ENCODE measurements at regions of chr7 and their contacts with region 1.

Region 1: GRCh38 chr7:71198887-71199286 is 66.9 kb downstream of the GALNT17 start:
- DNase-seq: peak in 4 of 5 donors; percentile 48 to 59 (median 54)
- H3K4me3 ChIP-seq: no peak overlapping the region
- H3K27ac ChIP-seq: peak overlapping the region in 1 of 2 donors; percentile 41
- H3K4me1 ChIP-seq: peaks cover 8% of the 10 kb centered on the region
- H3K27me3 ChIP-seq: no peaks in the 10 kb centered on the region
- CTCF ChIP-seq: no peak
- EP300 ChIP-seq: no peak
- POLR2A ChIP-seq: no peak

Region 2: GRCh38 chr7:70040970-70041766 is 1157.7 kb before region 1 on chr7:
- intact Hi-C with region 1: no loop called
- DNase-seq: no peak
- H3K4me3 ChIP-seq: no peak overlapping the region
- H3K27ac ChIP-seq: no peak overlapping the region
- H3K4me1 ChIP-seq: no peaks in the 10 kb centered on the region
- H3K27me3 ChIP-seq: no peaks in the 10 kb centered on the region
- CTCF ChIP-seq: peak in 1 of 3 donors; percentile 37
- EP300 ChIP-seq: no peak
- POLR2A ChIP-seq: no peak

Region 3: DNA sequence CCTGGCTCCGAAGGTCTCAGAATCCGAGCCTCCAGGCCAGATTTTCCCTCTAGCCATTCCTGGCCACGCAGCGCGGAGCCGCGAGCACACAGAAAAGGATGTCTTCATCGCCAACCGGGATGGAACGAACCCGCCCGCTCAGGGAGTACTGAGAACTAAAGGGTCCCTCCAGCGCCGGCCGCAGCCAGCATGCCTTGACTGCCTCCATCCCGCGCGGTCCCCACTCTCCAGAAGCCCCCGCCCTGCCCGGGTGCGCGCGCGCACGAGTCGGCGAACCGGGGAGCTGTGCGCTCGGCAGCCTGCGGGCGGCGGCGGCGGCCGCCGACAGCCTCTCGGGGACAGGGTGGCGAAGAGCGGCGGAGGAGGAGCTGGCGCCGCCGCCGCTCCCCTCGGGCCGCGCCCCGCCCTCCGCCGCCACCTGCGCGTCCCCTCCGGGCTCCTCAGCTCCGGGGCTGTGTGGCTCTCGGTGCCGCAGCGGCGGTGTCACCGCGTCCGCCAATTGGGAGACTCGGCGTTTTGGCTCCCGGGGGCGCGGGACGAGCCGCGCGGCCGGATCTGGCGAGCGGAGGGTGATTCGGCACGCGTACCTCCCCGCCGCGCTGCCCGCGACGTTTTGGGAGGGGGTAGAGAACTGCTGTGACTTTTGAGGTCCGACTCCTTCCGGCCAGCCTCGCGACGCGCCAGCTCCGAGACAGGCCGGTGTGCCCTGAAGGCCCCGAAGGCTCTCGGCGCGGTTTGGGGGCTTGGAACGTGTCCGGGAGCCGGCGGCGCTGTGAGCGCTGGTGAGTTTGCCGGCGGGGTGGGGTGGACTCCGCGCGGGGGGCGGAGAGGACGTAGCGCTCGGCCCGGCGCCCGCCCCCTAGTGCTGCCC is 67.4 kb before region 1 on chr7:
- intact Hi-C with region 1: loop called in 1 of 4 experiments (anchors 2 kb)
- DNase-seq: peak; percentile 82 to 86 (median 85)
- H3K4me3 ChIP-seq: peak overlapping the region; percentile 60
- H3K27ac ChIP-seq: peak overlapping the region; percentile 73 to 87
- H3K4me1 ChIP-seq: peaks cover 8% of the 10 kb centered on the region
- H3K27me3 ChIP-seq: no peaks in the 10 kb centered on the region
- CTCF ChIP-seq: peak in 2 of 3 donors; percentile 49 to 55
- EP300 ChIP-seq: no peak
- POLR2A ChIP-seq: peak; percentile 38

Measured in ovary (tissue), 10 donors.